Vagina (tissue), 2 donors: ENCODE measurements at regions of chr15 and their contacts with region 1.

Region 1: GRCh38 chr15:27101982-27102381 is 131.0 kb downstream of the GABRG3 start:
- DNase-seq: no peak
- H3K4me3 ChIP-seq: no peak overlapping the region
- H3K27ac ChIP-seq: no peak overlapping the region
- H3K4me1 ChIP-seq: no peaks in the 10 kb centered on the region
- H3K27me3 ChIP-seq: no peaks in the 10 kb centered on the region
- CTCF ChIP-seq: no peak
- POLR2A ChIP-seq: no peak

Region 2: GRCh38 chr15:26852980-26853379 is 249.0 kb before region 1 on chr15:
- intact Hi-C with region 1: no loop called
- DNase-seq: no peak
- H3K4me3 ChIP-seq: no peak overlapping the region
- H3K27ac ChIP-seq: no peak overlapping the region
- H3K4me1 ChIP-seq: no peaks in the 10 kb centered on the region
- H3K27me3 ChIP-seq: no peaks in the 10 kb centered on the region
- CTCF ChIP-seq: no peak
- POLR2A ChIP-seq: no peak

Region 3: DNA sequence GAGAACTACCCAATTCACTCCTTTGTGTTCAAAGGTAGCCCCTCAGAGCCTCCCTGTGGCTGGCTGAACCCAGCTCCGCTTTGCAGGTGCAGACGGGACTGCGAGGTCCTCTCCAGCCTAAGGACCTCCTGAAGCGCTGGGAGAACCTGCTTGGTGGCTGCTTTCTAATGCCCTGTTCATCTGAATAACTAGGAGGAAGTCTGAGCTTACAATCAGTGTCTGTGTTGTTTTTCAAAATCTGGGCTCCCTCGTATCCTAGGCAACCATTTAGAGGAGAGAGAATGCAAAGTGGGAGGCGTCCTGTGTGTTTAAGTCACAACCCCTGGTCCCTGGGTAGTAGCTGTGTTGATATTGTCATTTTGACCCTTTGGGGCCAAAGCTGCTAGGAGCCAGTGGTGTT is 31.1 kb before region 1 on chr15:
- intact Hi-C with region 1: loop called (anchors 1 kb)
- DNase-seq: no peak
- H3K4me3 ChIP-seq: no peak overlapping the region
- H3K27ac ChIP-seq: no peak overlapping the region
- H3K4me1 ChIP-seq: no peaks in the 10 kb centered on the region
- H3K27me3 ChIP-seq: no peaks in the 10 kb centered on the region
- CTCF ChIP-seq: no peak
- POLR2A ChIP-seq: no peak

Region 4: DNA sequence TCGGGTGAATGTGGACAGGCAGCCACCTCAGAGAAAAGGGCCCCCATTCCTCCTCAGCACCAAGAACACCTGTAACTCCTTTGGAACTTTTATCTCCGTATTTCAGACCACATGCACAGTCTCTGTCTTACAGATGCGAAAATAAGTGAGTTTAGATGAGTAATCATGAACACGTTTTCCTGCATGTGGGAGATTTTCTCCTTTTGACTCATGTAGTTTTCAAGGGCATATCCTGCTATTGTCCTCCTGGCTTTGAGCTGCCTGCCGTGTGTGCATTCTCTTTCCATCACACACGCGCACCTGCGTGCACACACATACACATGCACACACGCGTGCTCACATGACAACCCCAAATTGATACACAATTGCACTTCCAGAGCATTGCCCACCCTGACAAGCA is 108.2 kb after region 1 on chr15:
- intact Hi-C with region 1: no loop called
- DNase-seq: no peak
- H3K4me3 ChIP-seq: no peak overlapping the region
- H3K27ac ChIP-seq: no peak overlapping the region
- H3K4me1 ChIP-seq: no peaks in the 10 kb centered on the region
- H3K27me3 ChIP-seq: no peaks in the 10 kb centered on the region
- CTCF ChIP-seq: no peak
- POLR2A ChIP-seq: no peak